ENCODE measurements at regions of chr6 and their contacts with region 1.

Region 1: DNA sequence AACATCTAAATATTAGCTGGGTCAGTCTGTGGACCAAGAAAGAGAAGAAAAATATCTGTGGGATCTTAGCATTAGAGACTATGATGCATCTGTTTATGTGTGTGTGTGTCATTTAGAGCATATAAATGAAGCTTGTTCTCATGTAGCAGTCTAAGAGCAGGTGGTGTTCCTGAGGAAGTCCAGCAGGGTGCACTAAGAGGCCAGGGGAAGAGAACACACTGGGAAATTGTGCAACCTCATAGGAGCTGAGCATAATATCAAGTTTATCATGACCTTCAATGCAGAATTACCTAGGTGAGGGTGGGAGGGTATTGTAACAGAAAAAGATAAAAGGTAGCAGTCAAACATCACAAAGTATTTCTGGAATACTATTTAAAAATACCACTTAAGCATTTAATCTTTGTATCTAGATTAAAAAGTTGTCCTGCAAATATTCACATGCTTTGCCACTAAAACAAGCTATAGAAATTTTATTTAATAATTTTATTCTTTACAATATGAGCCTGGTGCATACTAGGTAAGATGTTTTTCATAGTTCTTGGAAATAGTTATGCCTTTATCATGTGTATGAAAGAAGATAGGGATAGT is 80.5 kb downstream of the SMPDL3A start:
- DNase-seq: no peak
- ATAC-seq: peak; percentile 90
- H3K4me3 ChIP-seq: no peak overlapping the region
- H3K27ac ChIP-seq: no peak overlapping the region
- H3K4me1 ChIP-seq: no peaks in the 10 kb centered on the region
- H3K27me3 ChIP-seq: no peaks in the 10 kb centered on the region
- CTCF ChIP-seq: peak; percentile 49 to 62 (median 62); a peak in 4 of 6 replicates
- EP300 ChIP-seq: no peak
- POLR2A ChIP-seq: no peak
- RAD21 ChIP-seq: peak; percentile 81

Region 2: DNA sequence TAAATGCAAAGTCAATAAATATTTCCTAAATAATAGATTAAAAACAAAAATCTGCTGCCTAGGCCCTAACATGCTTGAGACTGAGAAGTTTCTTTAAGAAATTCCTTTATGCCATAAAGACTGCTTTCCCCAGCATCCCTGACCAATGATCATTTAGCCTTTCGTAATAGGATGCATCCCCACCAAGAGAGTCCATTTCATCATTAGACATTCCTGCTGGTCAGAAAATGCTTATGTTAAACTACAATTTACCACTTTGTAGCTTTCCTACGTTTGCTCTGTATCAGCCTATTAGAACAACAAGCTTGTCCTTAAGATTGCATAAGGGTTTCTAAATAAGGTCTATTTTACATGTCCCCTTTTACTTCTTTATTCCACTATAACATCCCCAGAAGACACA is 529.9 kb before region 1 on chr6:
- CTCF ChIA-PET with region 1: no interaction called
- POLR2A ChIA-PET with region 1: no interaction called
- RAD21 ChIA-PET with region 1: no interaction called
- SMC1A ChIA-PET with region 1: no interaction called
- in situ Hi-C with region 1: no loop called
- intact Hi-C with region 1: no loop called
- DNase-seq: no peak
- ATAC-seq: no peak
- H3K4me3 ChIP-seq: no peak overlapping the region
- H3K27ac ChIP-seq: no peak overlapping the region
- H3K4me1 ChIP-seq: no peaks in the 10 kb centered on the region
- H3K27me3 ChIP-seq: no peaks in the 10 kb centered on the region
- CTCF ChIP-seq: no peak
- EP300 ChIP-seq: no peak
- POLR2A ChIP-seq: no peak
- RAD21 ChIP-seq: no peak

Region 3: GRCh38 chr6:122730775-122731386 is 138.7 kb before region 1 on chr6:
- CTCF ChIA-PET with region 1: interaction called, 42 read pairs
- POLR2A ChIA-PET with region 1: interaction called, 3 read pairs
- RAD21 ChIA-PET with region 1: interaction called, 66 read pairs
- SMC1A ChIA-PET with region 1: interaction called, 89 read pairs
- in situ Hi-C with region 1: no loop called
- intact Hi-C with region 1: no loop called
- DNase-seq: no peak
- ATAC-seq: peak; percentile 61
- H3K4me3 ChIP-seq: no peak overlapping the region
- H3K27ac ChIP-seq: no peak overlapping the region
- H3K4me1 ChIP-seq: no peaks in the 10 kb centered on the region
- H3K27me3 ChIP-seq: no peaks in the 10 kb centered on the region
- CTCF ChIP-seq: peak; percentile 61 to 77 (median 65)
- EP300 ChIP-seq: no peak
- POLR2A ChIP-seq: no peak
- RAD21 ChIP-seq: peak; percentile 86

Region 4: DNA sequence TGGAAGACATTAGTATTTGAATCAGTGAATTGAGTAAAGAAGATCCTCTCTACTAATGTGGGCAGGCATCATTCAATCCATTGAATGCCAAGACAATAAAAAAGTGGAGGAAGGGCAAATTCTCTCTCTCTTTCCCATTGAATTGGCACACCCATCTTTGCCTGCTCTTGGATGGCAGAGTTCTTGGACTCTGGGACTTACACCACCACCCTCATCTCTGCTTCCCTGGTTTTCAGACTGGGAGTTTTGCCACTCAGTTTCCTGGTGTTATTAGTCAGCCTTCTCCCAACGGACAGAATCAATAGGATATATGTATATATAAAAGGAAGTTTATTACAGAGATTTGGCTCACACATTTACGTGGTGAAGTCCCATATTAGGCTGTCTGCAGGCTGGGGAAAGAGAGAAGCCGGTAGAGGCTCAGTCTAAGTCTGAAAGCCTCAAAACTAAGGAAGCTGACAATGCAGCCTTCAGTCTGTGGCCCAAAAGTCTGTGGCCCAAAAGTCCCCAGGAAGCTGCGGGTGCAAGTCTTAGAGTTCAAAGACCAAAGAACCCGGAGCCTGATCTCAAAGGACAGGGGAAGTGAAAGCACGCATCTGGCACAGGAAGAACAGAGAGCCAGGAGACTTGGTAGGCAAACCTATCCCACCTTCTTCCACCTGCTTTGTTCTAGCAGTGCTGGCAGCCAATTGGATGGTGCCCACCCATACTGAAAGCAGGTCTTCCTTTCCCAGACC is 16.1 kb before region 1 on chr6:
- CTCF ChIA-PET with region 1: interaction called, 77 read pairs
- POLR2A ChIA-PET with region 1: no interaction called
- RAD21 ChIA-PET with region 1: interaction called, 17 read pairs
- SMC1A ChIA-PET with region 1: interaction called, 23 read pairs
- in situ Hi-C with region 1: no loop called
- intact Hi-C with region 1: no loop called
- DNase-seq: peak; percentile 40
- ATAC-seq: peak; percentile 95
- H3K4me3 ChIP-seq: no peak overlapping the region
- H3K27ac ChIP-seq: peak overlapping the region; percentile 36; the same call in 1 of the 2 replicates
- H3K4me1 ChIP-seq: peaks cover 3% of the 10 kb centered on the region; the same call in 1 of the 2 replicates
- H3K27me3 ChIP-seq: no peaks in the 10 kb centered on the region
- CTCF ChIP-seq: no peak
- EP300 ChIP-seq: peak in 1 of 2 experiments; percentile 71; a peak in 2 of 4 replicates
- POLR2A ChIP-seq: no peak
- RAD21 ChIP-seq: no peak

Region 5: GRCh38 chr6:122930252-122931180 is 61.0 kb after region 1 on chr6:
- CTCF ChIA-PET with region 1: interaction called, 46 read pairs
- POLR2A ChIA-PET with region 1: no interaction called
- RAD21 ChIA-PET with region 1: interaction called, 22 read pairs
- SMC1A ChIA-PET with region 1: interaction called, 66 read pairs
- in situ Hi-C with region 1: no loop called
- intact Hi-C with region 1: no loop called
- DNase-seq: peak; percentile 11
- ATAC-seq: peak; percentile 81
- H3K4me3 ChIP-seq: no peak overlapping the region
- H3K27ac ChIP-seq: no peak overlapping the region
- H3K4me1 ChIP-seq: no peaks in the 10 kb centered on the region
- H3K27me3 ChIP-seq: no peaks in the 10 kb centered on the region
- CTCF ChIP-seq: no peak
- EP300 ChIP-seq: peak; percentile 25 to 53; a peak in 1 of 4 replicates
- POLR2A ChIP-seq: no peak
- RAD21 ChIP-seq: no peak

Region 6: GRCh38 chr6:122977180-122977579 is 107.6 kb after region 1 on chr6:
- CTCF ChIA-PET with region 1: interaction called, 16 read pairs
- POLR2A ChIA-PET with region 1: no interaction called
- RAD21 ChIA-PET with region 1: interaction called, 6 read pairs
- SMC1A ChIA-PET with region 1: interaction called, 24 read pairs
- in situ Hi-C with region 1: no loop called
- intact Hi-C with region 1: no loop called
- DNase-seq: no peak
- ATAC-seq: no peak
- H3K4me3 ChIP-seq: no peak overlapping the region
- H3K27ac ChIP-seq: no peak overlapping the region
- H3K4me1 ChIP-seq: no peaks in the 10 kb centered on the region
- H3K27me3 ChIP-seq: no peaks in the 10 kb centered on the region
- CTCF ChIP-seq: no peak
- EP300 ChIP-seq: no peak
- POLR2A ChIP-seq: no peak
- RAD21 ChIP-seq: no peak

Region 7: GRCh38 chr6:123306334-123306733 is 436.8 kb after region 1 on chr6:
- CTCF ChIA-PET with region 1: interaction called, 7 read pairs
- POLR2A ChIA-PET with region 1: no interaction called
- RAD21 ChIA-PET with region 1: interaction called, 4 read pairs
- SMC1A ChIA-PET with region 1: interaction called, 17 read pairs
- in situ Hi-C with region 1: loop called (anchors 10 kb)
- intact Hi-C with region 1: no loop called
- DNase-seq: no peak
- ATAC-seq: no peak
- H3K4me3 ChIP-seq: no peak overlapping the region
- H3K27ac ChIP-seq: no peak overlapping the region
- H3K4me1 ChIP-seq: no peaks in the 10 kb centered on the region
- H3K27me3 ChIP-seq: no peaks in the 10 kb centered on the region
- CTCF ChIP-seq: no peak
- EP300 ChIP-seq: no peak
- POLR2A ChIP-seq: no peak
- RAD21 ChIP-seq: no peak

Region 8: DNA sequence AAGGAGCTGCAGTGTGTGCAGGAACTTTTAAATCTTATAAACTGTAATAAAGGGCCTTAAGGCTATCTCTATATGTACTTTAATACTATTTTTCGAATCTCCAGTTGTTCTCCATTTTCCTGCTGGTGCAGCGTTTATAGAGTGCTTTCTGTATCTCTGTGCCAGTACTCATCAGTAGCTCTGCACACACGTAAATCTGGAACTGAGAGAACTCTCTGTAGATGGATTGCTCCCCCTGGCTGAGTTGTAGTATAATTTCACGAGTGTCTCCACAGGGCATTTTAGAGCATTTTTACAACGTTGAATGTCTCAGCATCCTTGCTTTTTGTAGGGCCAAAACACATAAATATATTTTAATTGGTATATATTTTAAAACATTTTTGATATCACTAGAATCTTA is 510.7 kb after region 1 on chr6:
- CTCF ChIA-PET with region 1: interaction called, 41 read pairs
- POLR2A ChIA-PET with region 1: no interaction called
- RAD21 ChIA-PET with region 1: interaction called, 14 read pairs
- SMC1A ChIA-PET with region 1: interaction called, 18 read pairs
- in situ Hi-C with region 1: no loop called
- intact Hi-C with region 1: no loop called
- DNase-seq: no peak
- ATAC-seq: peak; percentile 74
- H3K4me3 ChIP-seq: no peak overlapping the region
- H3K27ac ChIP-seq: no peak overlapping the region
- H3K4me1 ChIP-seq: no peaks in the 10 kb centered on the region
- H3K27me3 ChIP-seq: no peaks in the 10 kb centered on the region
- CTCF ChIP-seq: peak; percentile 16 to 29 (median 19); a peak in 4 of 6 replicates
- EP300 ChIP-seq: no peak
- POLR2A ChIP-seq: no peak
- RAD21 ChIP-seq: no peak